ENCODE measurements at regions of chr11 and their contacts with region 1.

Region 1: GRCh38 chr11:66222358-66223149 is 45.9 kb upstream of the RAB1B start:
- DNase-seq: peak; percentile 82 to 98 (median 92)
- ATAC-seq: peak; percentile 99
- H3K4me3 ChIP-seq: no peak overlapping the region
- H3K4me3 Mint-ChIP-seq: no peak overlapping the region
- H3K27ac ChIP-seq: peak overlapping the region; percentile 23 to 82
- H3K27ac Mint-ChIP-seq: peak overlapping the region; percentile 93
- H3K4me1 ChIP-seq: peaks cover 6% of the 10 kb centered on the region
- H3K4me1 Mint-ChIP-seq: peaks cover 16% of the 10 kb centered on the region
- H3K27me3 ChIP-seq: no peaks in the 10 kb centered on the region
- H3K27me3 Mint-ChIP-seq: no peaks in the 10 kb centered on the region
- CTCF ChIP-seq: peak; percentile 98

Region 2: DNA sequence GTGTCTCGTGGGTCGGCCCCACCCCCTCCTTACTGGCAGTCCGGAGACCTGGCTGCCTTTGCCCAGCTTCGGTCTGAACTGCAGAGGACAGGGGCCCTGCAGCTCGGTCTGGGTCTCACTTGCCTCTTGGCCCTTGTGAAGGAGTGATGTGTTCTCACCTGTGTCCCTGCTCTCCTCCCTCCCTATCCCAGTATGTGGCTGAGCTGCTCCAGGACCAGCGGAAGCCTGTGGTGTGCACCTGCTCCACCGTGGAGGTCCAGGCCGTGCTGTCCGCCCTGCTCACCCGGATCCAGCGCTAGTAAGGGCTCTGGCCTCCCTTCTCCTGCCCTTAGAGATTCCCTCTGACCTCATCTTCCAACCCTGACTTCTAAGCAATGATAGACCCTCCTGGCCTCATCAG is 10.2 kb after region 1 on chr11:
- CTCF ChIA-PET with region 1: interaction called, 16 read pairs
- POLR2A ChIA-PET with region 1: no interaction called
- intact Hi-C with region 1: no loop called
- DNase-seq: no peak
- ATAC-seq: no peak
- H3K4me3 ChIP-seq: no peak overlapping the region
- H3K4me3 Mint-ChIP-seq: no peak overlapping the region
- H3K27ac ChIP-seq: no peak overlapping the region
- H3K27ac Mint-ChIP-seq: no peak overlapping the region
- H3K4me1 ChIP-seq: no peaks in the 10 kb centered on the region
- H3K4me1 Mint-ChIP-seq: no peaks in the 10 kb centered on the region
- H3K27me3 ChIP-seq: no peaks in the 10 kb centered on the region
- H3K27me3 Mint-ChIP-seq: no peaks in the 10 kb centered on the region
- CTCF ChIP-seq: no peak

Region 3: DNA sequence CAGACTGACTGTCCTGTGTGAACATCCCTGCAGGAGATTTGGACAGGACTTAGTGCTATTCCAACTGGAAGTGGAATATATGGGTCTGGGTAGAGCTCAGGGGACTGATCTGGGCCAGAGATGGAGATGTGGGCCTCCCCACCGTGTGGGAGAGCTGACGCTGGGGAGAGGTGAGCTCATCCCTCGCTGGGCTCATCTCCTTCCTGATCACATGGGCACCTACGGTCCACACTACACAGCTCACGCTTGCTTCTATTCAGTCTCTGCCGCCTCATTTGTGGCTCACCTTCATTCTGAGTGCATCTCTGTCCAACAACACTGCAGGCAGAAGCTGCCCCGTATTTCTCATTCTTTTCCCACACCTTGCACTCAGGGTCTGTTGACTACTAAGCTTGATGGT is 29.3 kb after region 1 on chr11:
- CTCF ChIA-PET with region 1: interaction called, 24 read pairs
- POLR2A ChIA-PET with region 1: interaction called, 4 read pairs
- intact Hi-C with region 1: no loop called
- DNase-seq: no peak
- ATAC-seq: no peak
- H3K4me3 ChIP-seq: no peak overlapping the region
- H3K4me3 Mint-ChIP-seq: no peak overlapping the region
- H3K27ac ChIP-seq: no peak overlapping the region
- H3K27ac Mint-ChIP-seq: peak overlapping the region; percentile 73
- H3K4me1 ChIP-seq: peaks cover 15% of the 10 kb centered on the region
- H3K4me1 Mint-ChIP-seq: peaks cover 10% of the 10 kb centered on the region
- H3K27me3 ChIP-seq: no peaks in the 10 kb centered on the region
- H3K27me3 Mint-ChIP-seq: no peaks in the 10 kb centered on the region
- CTCF ChIP-seq: no peak

Region 4: GRCh38 chr11:66282468-66283386 is 60.2 kb after region 1 on chr11:
- CTCF ChIA-PET with region 1: interaction called, 63 read pairs
- POLR2A ChIA-PET with region 1: interaction called, 6 read pairs
- intact Hi-C with region 1: loop called (anchors 1 kb)
- DNase-seq: peak; percentile 98 to 100 (median 99)
- ATAC-seq: peak; percentile 73
- H3K4me3 ChIP-seq: no peak overlapping the region
- H3K4me3 Mint-ChIP-seq: no peak overlapping the region
- H3K27ac ChIP-seq: peak overlapping the region in 1 of 2 experiments; percentile 59
- H3K27ac Mint-ChIP-seq: peak overlapping the region; percentile 84
- H3K4me1 ChIP-seq: peaks cover 27% of the 10 kb centered on the region
- H3K4me1 Mint-ChIP-seq: peaks cover 45% of the 10 kb centered on the region
- H3K27me3 ChIP-seq: peaks cover 0 to 5% of the 10 kb centered on the region in 2 experiments
- H3K27me3 Mint-ChIP-seq: no peaks in the 10 kb centered on the region
- CTCF ChIP-seq: peak; percentile 89

Region 5: DNA sequence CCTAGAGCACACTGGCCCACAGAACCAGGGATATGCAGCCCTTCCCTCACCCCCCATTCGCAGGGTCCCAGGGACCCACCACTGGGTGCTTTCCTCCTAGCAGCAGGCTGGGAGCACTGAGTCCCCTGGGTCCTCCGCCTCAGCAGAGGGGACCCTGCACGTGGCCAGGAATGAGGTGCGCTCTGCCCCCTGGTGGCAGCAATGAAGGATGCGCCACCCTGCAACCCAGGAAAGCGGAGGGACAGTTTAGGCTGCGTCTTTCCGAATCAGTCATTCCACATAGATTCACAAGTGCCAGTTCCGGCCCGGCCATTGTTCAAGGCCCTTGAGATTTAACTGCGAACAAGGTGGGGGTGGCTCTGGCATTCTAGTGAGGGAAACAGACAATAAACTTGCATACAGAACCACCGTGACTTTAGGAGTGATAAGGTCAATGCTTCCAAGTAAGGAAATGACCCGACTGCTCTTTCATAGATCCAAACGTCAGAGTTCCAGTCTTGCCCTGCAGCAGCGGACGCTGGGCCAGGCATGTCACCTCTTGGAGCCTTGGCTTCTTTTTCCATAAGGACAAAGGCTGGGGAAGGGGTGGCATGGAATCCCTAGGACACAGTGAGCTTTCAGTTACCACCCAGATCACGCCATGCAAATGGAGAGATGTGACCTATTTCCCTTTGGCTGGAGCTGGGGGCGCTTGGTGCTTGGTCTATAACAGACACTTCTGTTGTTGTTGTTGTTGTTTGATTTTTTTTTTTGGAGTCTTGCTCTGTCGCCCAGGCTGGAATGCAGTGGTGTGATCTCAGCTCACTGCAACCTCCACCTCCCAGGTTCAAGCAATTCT is 106.0 kb after region 1 on chr11:
- CTCF ChIA-PET with region 1: no interaction called
- POLR2A ChIA-PET with region 1: no interaction called
- intact Hi-C with region 1: loop called in 1 of 2 experiments (anchors 1 kb)
- DNase-seq: peak; percentile 65 to 92 (median 81)
- ATAC-seq: peak; percentile 83
- H3K4me3 ChIP-seq: peak overlapping the region; percentile 12
- H3K4me3 Mint-ChIP-seq: peak overlapping the region; percentile 67
- H3K27ac ChIP-seq: peak overlapping the region in 1 of 2 experiments; percentile 57
- H3K27ac Mint-ChIP-seq: peak overlapping the region; percentile 89
- H3K4me1 ChIP-seq: peaks cover 45% of the 10 kb centered on the region
- H3K4me1 Mint-ChIP-seq: peaks cover 39% of the 10 kb centered on the region
- H3K27me3 ChIP-seq: no peaks in the 10 kb centered on the region
- H3K27me3 Mint-ChIP-seq: no peaks in the 10 kb centered on the region
- CTCF ChIP-seq: peak; percentile 92

Measured in CD8-positive, alpha-beta T cell (primary cell).